H1 (cell line): ENCODE measurements at regions of chr12 and their contacts with region 1.

Region 1: GRCh38 chr12:6323340-6323994 is 13.0 kb downstream of the PLEKHG6 start:
- DNase-seq: peak in 1 of 2 experiments; percentile 72
- H3K4me3 ChIP-seq: peak overlapping the region in 2 of 4 experiments; percentile 6 to 48; a peak in 3 of 8 replicates
- H3K27ac ChIP-seq: peak overlapping the region; percentile 89
- H3K4me1 ChIP-seq: peaks cover 13 to 41% (median 29%) of the 10 kb centered on the region in 4 experiments
- H3K27me3 ChIP-seq: no peaks in the 10 kb centered on the region
- CTCF ChIP-seq: peak in 2 of 3 experiments; percentile 19 to 40; a peak in 3 of 4 replicates
- EP300 ChIP-seq: 0 out of 3 replicates have a peak, but pooled peaks of 1 of the 2 experiments have one; percentile 45
- POLR2A ChIP-seq: peak in 1 of 2 experiments; percentile 38; a peak in 1 of 3 replicates
- RAD21 ChIP-seq: peak in 1 of 2 experiments; percentile 37; a peak in 2 of 4 replicates

Region 2: DNA sequence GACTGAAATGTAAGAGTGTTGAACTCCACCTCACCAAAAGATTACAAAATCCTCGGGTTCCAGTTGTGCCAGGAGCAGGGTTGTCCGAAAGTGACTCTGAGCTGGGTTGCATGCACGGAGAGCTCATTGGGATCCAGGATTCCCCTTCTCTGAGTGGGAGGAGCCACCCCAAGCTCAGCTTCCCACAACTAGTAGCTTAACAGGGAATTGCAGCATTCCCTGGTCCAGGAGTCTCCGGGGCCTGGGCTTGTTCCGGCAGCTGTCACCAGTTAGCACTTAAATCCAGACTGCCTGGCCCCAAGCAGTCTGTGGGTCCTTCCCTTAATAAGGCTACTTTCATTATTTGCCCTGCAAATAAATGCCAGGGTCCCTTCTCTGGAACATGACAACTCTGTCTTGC is 73.1 kb before region 1 on chr12:
- CTCF ChIA-PET with region 1: no interaction called
- POLR2A ChIA-PET with region 1: no interaction called
- DNase-seq: no peak
- H3K4me3 ChIP-seq: no peak overlapping the region
- H3K27ac ChIP-seq: no peak overlapping the region
- H3K4me1 ChIP-seq: no peaks in the 10 kb centered on the region; a peak in 1 of 7 replicates
- H3K27me3 ChIP-seq: no peaks in the 10 kb centered on the region
- CTCF ChIP-seq: no peak
- EP300 ChIP-seq: no peak
- POLR2A ChIP-seq: no peak
- RAD21 ChIP-seq: no peak

Region 3: DNA sequence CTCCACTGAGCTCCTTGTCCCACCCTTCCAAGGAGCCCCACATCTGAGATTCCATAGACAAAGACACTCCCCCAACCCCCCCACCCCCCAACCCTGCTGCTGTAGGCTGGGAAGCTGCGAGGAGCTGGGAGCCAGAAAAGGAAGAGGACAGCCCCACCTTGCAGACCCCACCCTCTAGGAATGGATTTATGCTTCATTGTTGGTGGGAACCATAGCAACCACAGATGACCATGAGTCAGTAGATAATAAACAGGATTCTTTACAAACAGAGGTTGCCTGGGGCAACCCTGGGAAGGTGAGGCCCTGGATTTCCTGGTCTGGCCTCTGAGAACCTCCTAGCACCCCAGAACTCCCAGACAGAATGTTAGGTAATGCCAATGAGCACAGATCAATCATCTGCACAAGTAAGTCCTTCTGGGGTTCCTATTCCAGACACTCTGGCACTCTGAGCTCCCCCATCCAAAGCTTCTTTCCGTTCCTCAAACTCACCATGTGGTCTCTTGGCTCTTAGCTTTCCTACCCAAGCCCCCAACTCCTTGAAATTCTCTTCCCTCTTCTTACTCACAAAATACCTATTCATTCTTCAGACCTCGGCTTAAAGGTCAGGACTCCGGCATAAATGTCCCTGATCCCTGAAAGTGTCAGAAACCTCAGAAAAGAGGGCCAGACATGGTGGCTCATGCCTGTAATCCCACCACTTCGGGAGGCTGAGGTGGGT is 28.2 kb before region 1 on chr12:
- CTCF ChIA-PET with region 1: no interaction called
- POLR2A ChIA-PET with region 1: no interaction called
- DNase-seq: no peak
- H3K4me3 ChIP-seq: no peak overlapping the region
- H3K27ac ChIP-seq: no peak overlapping the region
- H3K4me1 ChIP-seq: peaks cover 0 to 5% (median 0%) of the 10 kb centered on the region in 4 experiments; a peak in 1 of 7 replicates
- H3K27me3 ChIP-seq: no peaks in the 10 kb centered on the region
- CTCF ChIP-seq: no peak
- EP300 ChIP-seq: no peak
- POLR2A ChIP-seq: no peak
- RAD21 ChIP-seq: no peak

Region 4: GRCh38 chr12:6312529-6313325 is 10.7 kb before region 1 on chr12:
- CTCF ChIA-PET with region 1: interaction called, 20 read pairs
- POLR2A ChIA-PET with region 1: interaction called, 24 read pairs
- DNase-seq: peak in 1 of 2 experiments; percentile 83
- H3K4me3 ChIP-seq: no peak overlapping the region
- H3K27ac ChIP-seq: no peak overlapping the region
- H3K4me1 ChIP-seq: peaks cover 4 to 28% (median 20%) of the 10 kb centered on the region in 4 experiments
- H3K27me3 ChIP-seq: peaks cover 0 to 4% (median 2%) of the 10 kb centered on the region in 4 experiments; a peak in 4 of 7 replicates
- CTCF ChIP-seq: no peak
- EP300 ChIP-seq: no peak
- POLR2A ChIP-seq: no peak
- RAD21 ChIP-seq: no peak

Region 5: DNA sequence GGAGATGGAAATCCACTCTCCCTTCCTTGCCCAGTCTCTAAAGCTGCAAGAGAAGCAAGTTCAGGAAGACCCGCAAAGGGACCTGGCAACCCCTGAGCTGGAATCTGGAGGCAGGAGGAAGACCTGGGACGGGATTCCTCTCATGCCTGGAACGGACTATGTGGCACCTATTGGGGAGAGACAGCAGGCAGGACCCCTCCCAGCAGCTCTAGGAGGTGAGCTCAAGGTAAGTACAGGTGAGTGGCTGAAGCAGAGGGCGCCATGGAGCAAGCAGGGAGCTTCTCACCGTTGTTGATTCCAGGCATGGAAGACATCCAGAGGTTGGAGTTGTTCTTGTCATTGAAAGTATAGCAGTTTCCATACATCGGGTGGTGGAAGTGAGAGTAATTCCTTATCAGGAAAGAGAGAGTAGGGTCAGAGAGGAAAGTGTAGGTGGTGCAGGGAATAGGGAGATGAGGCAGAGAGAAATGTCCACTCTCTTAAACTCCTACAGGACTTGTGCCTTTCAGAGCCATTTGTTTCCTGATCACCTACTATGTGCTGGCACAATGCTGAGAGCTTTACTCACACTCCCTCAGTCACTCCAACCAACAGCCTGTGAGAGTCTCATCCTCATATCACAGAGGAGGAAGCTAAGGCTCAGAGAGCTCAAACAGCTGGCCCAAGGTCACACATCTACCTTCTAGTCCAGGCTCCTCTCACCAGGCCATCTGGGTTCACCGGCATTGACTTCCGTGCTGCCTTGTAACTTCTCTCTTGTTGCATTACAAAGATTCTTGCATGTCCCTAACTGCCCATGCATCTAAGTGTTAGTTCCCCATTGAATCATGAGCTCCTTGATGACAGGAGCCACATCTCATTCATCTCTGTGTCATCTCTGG is 32.3 kb after region 1 on chr12:
- CTCF ChIA-PET with region 1: interaction called, 32 read pairs
- POLR2A ChIA-PET with region 1: interaction called, 5 read pairs
- DNase-seq: peak; percentile 53 to 74
- H3K4me3 ChIP-seq: no peak overlapping the region
- H3K27ac ChIP-seq: no peak overlapping the region
- H3K4me1 ChIP-seq: peaks cover 0 to 9% (median 0%) of the 10 kb centered on the region in 4 experiments; a peak in 4 of 7 replicates
- H3K27me3 ChIP-seq: no peaks in the 10 kb centered on the region
- CTCF ChIP-seq: peak; percentile 50 to 72 (median 69)
- EP300 ChIP-seq: 0 out of 3 replicates have a peak, but pooled peaks of 1 of the 2 experiments have one; percentile 22
- POLR2A ChIP-seq: no peak
- RAD21 ChIP-seq: peak; percentile 43 to 60; a peak in 3 of 4 replicates

Region 6: GRCh38 chr12:6376079-6376869 is 52.8 kb after region 1 on chr12:
- CTCF ChIA-PET with region 1: interaction called, 66 read pairs
- POLR2A ChIA-PET with region 1: interaction called, 214 read pairs
- DNase-seq: peak; percentile 54 to 74
- H3K4me3 ChIP-seq: peak overlapping the region; percentile 64 to 84 (median 74)
- H3K27ac ChIP-seq: peak overlapping the region; percentile 92
- H3K4me1 ChIP-seq: peaks cover 5 to 47% (median 33%) of the 10 kb centered on the region in 4 experiments
- H3K27me3 ChIP-seq: peaks cover 0 to 2% (median 0%) of the 10 kb centered on the region in 4 experiments; a peak in 2 of 7 replicates
- CTCF ChIP-seq: peak in 2 of 3 experiments; percentile 41 to 58; a peak in 3 of 4 replicates
- EP300 ChIP-seq: no peak
- POLR2A ChIP-seq: peak in 1 of 2 experiments; percentile 69; a peak in 2 of 3 replicates
- RAD21 ChIP-seq: peak; percentile 30 to 55

Region 7: GRCh38 chr12:6407236-6407954 is 83.9 kb after region 1 on chr12:
- CTCF ChIA-PET with region 1: no interaction called
- POLR2A ChIA-PET with region 1: no interaction called
- DNase-seq: no peak
- H3K4me3 ChIP-seq: no peak overlapping the region
- H3K27ac ChIP-seq: no peak overlapping the region
- H3K4me1 ChIP-seq: no peaks in the 10 kb centered on the region
- H3K27me3 ChIP-seq: no peaks in the 10 kb centered on the region
- CTCF ChIP-seq: no peak
- EP300 ChIP-seq: no peak
- POLR2A ChIP-seq: no peak
- RAD21 ChIP-seq: no peak

Region 8: GRCh38 chr12:6443361-6443983 is 120.0 kb after region 1 on chr12:
- CTCF ChIA-PET with region 1: interaction called, 13 read pairs
- POLR2A ChIA-PET with region 1: no interaction called
- DNase-seq: no peak
- H3K4me3 ChIP-seq: no peak overlapping the region
- H3K27ac ChIP-seq: no peak overlapping the region
- H3K4me1 ChIP-seq: no peaks in the 10 kb centered on the region
- H3K27me3 ChIP-seq: no peaks in the 10 kb centered on the region
- CTCF ChIP-seq: no peak
- EP300 ChIP-seq: no peak
- POLR2A ChIP-seq: no peak
- RAD21 ChIP-seq: no peak

Region 9: GRCh38 chr12:6672143-6672542 is 348.7 kb after region 1 on chr12:
- CTCF ChIA-PET with region 1: no interaction called
- POLR2A ChIA-PET with region 1: no interaction called
- DNase-seq: no peak
- H3K4me3 ChIP-seq: no peak overlapping the region
- H3K27ac ChIP-seq: no peak overlapping the region
- H3K4me1 ChIP-seq: no peaks in the 10 kb centered on the region
- H3K27me3 ChIP-seq: no peaks in the 10 kb centered on the region
- CTCF ChIP-seq: no peak
- EP300 ChIP-seq: no peak
- POLR2A ChIP-seq: no peak
- RAD21 ChIP-seq: no peak